Dorsolateral prefrontal cortex (tissue), 120 donors: ENCODE measurements at regions of chr3 and their contacts with region 1.

Region 1: DNA sequence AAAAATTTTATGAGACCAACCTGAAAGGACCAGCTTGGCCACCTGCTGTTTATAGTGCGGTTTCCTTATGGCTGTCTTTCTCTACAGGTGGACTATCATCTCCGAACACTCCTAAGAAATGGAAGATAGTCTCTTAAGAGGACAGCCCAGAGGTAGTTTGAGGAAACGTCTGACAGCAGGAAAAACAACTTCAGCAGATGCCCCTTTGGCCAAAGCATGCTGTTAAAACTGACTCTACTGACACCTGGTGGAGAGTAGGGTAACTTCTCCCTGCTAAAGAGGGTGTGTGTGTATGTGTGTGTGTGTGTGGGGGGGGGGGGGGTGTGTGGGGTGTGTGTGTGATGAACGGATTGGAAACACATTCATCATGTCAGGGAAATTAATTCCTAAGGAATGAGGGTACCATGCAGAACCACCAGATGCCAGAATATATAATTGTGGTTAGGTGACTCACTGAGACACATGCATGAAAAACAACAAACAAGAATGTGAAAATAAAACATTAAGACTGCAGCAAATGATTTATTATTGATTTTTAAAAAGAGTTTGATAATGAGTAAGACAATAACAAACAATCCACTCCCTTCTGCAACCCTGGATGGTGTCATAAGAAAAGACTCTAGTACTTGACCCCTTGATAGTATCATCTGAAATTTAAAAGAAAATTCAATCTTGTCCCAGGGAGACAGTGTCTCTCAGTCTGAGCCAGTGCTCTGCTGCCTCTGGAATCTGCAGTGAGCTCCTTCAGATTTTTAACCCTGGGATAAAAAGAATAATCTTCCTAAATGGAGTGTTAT is 256.5 kb downstream of the THRB start:
- DNase-seq: peak in 3 of 10 donors; percentile 19 to 63 (median 25)
- H3K4me3 ChIP-seq: no peak overlapping the region
- H3K27ac ChIP-seq: peak overlapping the region in 27 of 59 donors; percentile 3 to 73 (median 39)
- H3K27me3 ChIP-seq: no peaks in the 10 kb centered on the region
- CTCF ChIP-seq: peak; percentile 29 to 81 (median 62)

Region 2: GRCh38 chr3:23923786-23924185 is 314.4 kb before region 1 on chr3:
- intact Hi-C with region 1: loop called (anchors 5 to 10 kb)
- DNase-seq: no peak
- H3K4me3 ChIP-seq: no peak overlapping the region
- H3K27ac ChIP-seq: peak overlapping the region in 1 of 59 donors; percentile 1
- H3K27me3 ChIP-seq: no peaks in the 10 kb centered on the region
- CTCF ChIP-seq: no peak

Region 3: DNA sequence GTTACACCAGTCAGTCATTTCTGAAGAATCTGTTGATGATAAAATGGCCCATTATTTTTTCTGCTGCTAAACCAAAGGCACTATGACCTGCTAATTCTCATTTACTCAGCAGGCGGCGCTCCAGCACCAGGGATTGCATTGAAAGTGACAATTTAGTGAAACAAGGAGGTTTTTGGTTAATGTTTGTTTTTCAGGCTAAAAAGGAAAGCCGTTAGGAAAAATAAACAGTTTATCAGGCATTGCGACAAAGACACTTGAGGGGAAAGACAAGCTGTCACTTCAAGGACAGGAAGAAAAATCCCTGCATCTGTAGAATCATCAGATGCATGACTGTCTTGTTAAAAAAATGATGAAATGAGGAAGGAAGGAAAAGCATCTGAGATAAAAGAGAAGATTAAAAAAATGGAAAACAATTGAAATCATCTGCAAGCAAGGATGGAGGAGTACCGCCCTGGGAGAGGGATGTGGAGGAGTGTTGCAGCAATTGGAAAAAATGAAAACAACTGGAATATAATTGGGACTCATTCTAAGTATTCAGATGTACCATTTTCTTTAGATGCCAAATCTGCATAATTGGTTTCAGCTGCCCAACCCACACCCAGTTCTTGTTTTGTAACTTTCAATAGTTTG is 239.0 kb before region 1 on chr3:
- intact Hi-C with region 1: loop called (anchors 2 kb)
- DNase-seq: peak; percentile 56 to 96 (median 79)
- H3K4me3 ChIP-seq: peak overlapping the region in 41 of 59 donors; percentile 0 to 55 (median 34)
- H3K27ac ChIP-seq: peak overlapping the region in 55 of 59 donors; percentile 1 to 87 (median 73)
- H3K27me3 ChIP-seq: no peaks in the 10 kb centered on the region
- CTCF ChIP-seq: peak; percentile 80 to 98 (median 93)

Region 4: DNA sequence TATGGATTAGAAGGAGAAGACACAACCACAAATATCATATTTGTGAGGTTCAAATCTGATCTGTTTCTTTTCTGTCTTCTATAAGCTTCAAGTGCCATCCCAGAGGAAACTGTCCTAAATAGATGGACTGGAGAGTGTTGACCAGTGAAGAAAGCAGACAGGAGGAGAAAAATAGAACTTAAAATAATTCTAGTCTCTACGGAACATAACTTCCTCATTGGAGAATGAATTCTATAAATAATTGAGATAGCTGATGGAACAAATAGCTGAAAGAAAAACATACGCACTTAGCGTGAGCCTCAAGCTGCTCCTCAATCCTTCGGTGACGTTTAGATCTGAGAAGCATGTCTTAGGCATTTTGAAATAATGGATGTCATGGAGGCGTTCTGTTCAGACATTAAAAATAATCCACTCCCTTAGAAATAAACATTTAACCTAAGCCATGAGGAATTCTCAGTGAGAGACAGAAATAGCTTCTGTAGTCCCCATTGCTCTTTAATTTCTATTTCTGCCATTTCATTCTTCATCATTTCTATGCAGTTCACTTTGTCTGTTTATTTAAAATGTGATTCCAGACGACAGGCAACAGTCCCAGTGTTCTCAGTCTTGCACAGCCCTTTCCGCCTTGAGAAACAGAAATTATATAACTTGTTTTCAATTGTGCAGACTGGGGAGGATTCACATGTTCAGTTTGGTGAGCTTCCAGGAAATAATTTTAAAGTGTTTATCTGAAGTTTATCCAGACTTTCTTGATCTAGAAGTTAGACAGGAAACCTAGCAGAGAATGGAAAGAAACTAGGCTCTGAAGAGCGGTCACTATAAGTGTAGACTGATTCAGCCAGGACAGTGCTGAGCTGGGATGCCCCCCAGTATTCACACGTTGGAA is 195.8 kb before region 1 on chr3:
- intact Hi-C with region 1: loop called in 1 of 2 experiments (anchors 5 kb)
- DNase-seq: peak in 1 of 10 donors; percentile 24
- H3K4me3 ChIP-seq: peak overlapping the region in 33 of 59 donors; percentile 2 to 36 (median 19)
- H3K27ac ChIP-seq: peak overlapping the region in 58 of 59 donors; percentile 51 to 93 (median 81)
- H3K27me3 ChIP-seq: no peaks in the 10 kb centered on the region
- CTCF ChIP-seq: no peak

Region 5: GRCh38 chr3:24174614-24175013 is 63.6 kb before region 1 on chr3:
- intact Hi-C with region 1: no loop called
- DNase-seq: no peak
- H3K4me3 ChIP-seq: no peak overlapping the region
- H3K27ac ChIP-seq: no peak overlapping the region
- H3K27me3 ChIP-seq: no peaks in the 10 kb centered on the region
- CTCF ChIP-seq: no peak

Region 6: DNA sequence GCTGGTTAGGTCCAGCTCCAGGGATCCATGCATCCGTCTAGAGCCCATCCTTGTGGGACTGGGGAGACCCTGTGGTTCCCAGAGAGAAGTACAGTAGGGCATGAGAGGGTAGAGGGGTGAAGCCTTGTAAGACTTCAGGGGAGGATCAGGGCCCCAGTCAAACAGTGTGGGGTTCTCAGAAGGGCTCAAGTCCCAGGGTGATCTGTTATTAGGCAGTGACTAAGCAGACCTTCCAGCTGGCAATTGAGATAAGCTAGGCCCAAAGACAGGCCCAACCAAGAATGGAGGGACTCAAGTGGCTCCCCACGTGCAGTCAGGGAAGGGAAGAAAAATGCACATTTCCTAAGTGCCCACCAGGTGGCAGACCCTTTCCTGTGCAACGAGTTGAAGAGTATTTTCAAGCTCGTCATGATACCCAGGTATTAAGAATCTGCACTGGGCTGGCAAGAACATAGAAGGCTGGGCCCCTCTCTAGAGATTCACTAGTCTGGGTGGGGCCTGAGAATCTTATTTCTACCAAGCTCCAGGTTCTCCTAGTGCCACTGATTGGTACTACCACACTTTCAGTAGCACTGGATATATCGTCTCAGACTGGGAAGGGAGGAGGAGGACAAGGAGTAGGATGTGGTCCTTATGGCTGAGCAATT is 52.3 kb before region 1 on chr3:
- intact Hi-C with region 1: loop called (anchors 2 to 5 kb)
- DNase-seq: peak in 3 of 10 donors; percentile 28 to 58 (median 49)
- H3K4me3 ChIP-seq: peak overlapping the region in 3 of 59 donors; percentile 15 to 35 (median 24)
- H3K27ac ChIP-seq: peak overlapping the region in 1 of 59 donors; percentile 14
- H3K27me3 ChIP-seq: no peaks in the 10 kb centered on the region
- CTCF ChIP-seq: peak in 55 of 56 donors; percentile 42 to 78 (median 68)